ENCODE measurements at regions of chr12 and their contacts with region 1.

Region 1: GRCh38 chr12:110698171-110698902 is 9.4 kb upstream of the HVCN1 start:
- DNase-seq: peak; percentile 69
- H3K4me3 ChIP-seq: no peak overlapping the region
- H3K27ac ChIP-seq: peak overlapping the region; percentile 27
- H3K4me1 ChIP-seq: no peaks in the 10 kb centered on the region
- H3K27me3 ChIP-seq: no peaks in the 10 kb centered on the region
- CTCF ChIP-seq: peak; percentile 60

Region 2: GRCh38 chr12:110513842-110514241 is 184.5 kb before region 1 on chr12:
- intact Hi-C with region 1: loop called (anchors 10 kb)
- DNase-seq: no peak
- H3K4me3 ChIP-seq: no peak overlapping the region
- H3K27ac ChIP-seq: no peak overlapping the region
- H3K4me1 ChIP-seq: no peaks in the 10 kb centered on the region
- H3K27me3 ChIP-seq: no peaks in the 10 kb centered on the region
- CTCF ChIP-seq: no peak

Region 3: DNA sequence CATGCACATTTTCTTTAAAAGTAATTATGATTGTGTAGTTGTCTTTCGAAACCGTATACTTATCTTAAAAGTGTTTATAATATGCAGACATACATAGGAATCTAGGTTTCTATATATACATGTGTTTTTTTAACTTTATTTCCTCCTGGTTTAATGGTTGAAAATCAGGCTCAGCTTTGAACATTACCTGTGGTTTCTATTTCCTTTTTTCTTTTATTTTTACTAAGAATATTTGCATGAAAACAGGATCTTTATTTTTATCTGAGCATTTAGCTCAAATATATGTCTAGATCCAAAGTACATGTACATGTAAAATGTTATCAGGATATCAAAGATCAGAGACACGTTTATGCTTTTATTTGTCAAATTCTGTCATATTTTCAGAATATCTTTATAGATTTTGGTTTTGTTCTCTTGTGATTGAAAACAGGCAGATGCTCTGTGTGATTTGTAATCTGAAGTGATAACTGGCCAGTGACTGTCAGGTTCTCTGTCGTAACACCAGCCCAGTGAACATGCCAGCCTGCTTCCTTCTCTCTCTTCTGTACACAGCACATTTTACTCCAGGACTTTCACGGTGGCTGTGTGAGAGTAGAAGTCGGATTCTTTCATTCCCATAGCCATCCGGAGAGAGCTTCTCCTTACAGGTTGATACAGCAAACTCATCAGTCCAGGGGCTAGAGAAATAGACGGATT is 70.7 kb before region 1 on chr12:
- intact Hi-C with region 1: loop called (anchors 10 kb)
- DNase-seq: no peak
- H3K4me3 ChIP-seq: no peak overlapping the region
- H3K27ac ChIP-seq: no peak overlapping the region
- H3K4me1 ChIP-seq: no peaks in the 10 kb centered on the region
- H3K27me3 ChIP-seq: no peaks in the 10 kb centered on the region
- CTCF ChIP-seq: no peak

Measured in colonic mucosa (tissue), 4 donors.